ENCODE measurements at regions of chr2 and their contacts with region 1.

Region 1: GRCh38 chr2:12501469-12502158 is 215.1 kb upstream of the TRIB2 start:
- DNase-seq: peak in 8 of 9 donors; percentile 39 to 74 (median 70)
- ATAC-seq: peak; percentile 86
- H3K4me3 ChIP-seq: peak overlapping the region; percentile 5
- H3K4me3 Mint-ChIP-seq: peak overlapping the region; percentile 64 to 83 (median 77)
- H3K27ac ChIP-seq: peak overlapping the region; percentile 69
- H3K27ac Mint-ChIP-seq: peak overlapping the region; percentile 87 to 96 (median 91)
- H3K4me1 ChIP-seq: peaks cover 89 to 98% of the 10 kb centered on the region in 2 donors
- H3K4me1 Mint-ChIP-seq: peaks cover 74 to 100% (median 98%) of the 10 kb centered on the region in 7 donors
- H3K27me3 ChIP-seq: no peaks in the 10 kb centered on the region
- H3K27me3 Mint-ChIP-seq: no peaks in the 10 kb centered on the region

Region 2: GRCh38 chr2:12176623-12177454 is 324.8 kb before region 1 on chr2:
- CTCF ChIA-PET with region 1: no interaction called
- POLR2A ChIA-PET with region 1: no interaction called
- intact Hi-C with region 1: loop called in 1 of 2 experiments (anchors 5 kb)
- DNase-seq: peak in 1 of 9 donors; percentile 13
- ATAC-seq: peak; percentile 83
- H3K4me3 ChIP-seq: peak overlapping the region; percentile 21
- H3K4me3 Mint-ChIP-seq: peak overlapping the region in 9 of 10 donors; percentile 25 to 76 (median 62)
- H3K27ac ChIP-seq: no peak overlapping the region
- H3K27ac Mint-ChIP-seq: peak overlapping the region in 8 of 9 donors; percentile 8 to 95 (median 58)
- H3K4me1 ChIP-seq: peaks cover 10 to 25% of the 10 kb centered on the region in 2 donors
- H3K4me1 Mint-ChIP-seq: peaks cover 33 to 67% (median 52%) of the 10 kb centered on the region in 7 donors
- H3K27me3 ChIP-seq: no peaks in the 10 kb centered on the region
- H3K27me3 Mint-ChIP-seq: peaks cover 0 to 7% (median 0%) of the 10 kb centered on the region in 5 donors

Region 3: DNA sequence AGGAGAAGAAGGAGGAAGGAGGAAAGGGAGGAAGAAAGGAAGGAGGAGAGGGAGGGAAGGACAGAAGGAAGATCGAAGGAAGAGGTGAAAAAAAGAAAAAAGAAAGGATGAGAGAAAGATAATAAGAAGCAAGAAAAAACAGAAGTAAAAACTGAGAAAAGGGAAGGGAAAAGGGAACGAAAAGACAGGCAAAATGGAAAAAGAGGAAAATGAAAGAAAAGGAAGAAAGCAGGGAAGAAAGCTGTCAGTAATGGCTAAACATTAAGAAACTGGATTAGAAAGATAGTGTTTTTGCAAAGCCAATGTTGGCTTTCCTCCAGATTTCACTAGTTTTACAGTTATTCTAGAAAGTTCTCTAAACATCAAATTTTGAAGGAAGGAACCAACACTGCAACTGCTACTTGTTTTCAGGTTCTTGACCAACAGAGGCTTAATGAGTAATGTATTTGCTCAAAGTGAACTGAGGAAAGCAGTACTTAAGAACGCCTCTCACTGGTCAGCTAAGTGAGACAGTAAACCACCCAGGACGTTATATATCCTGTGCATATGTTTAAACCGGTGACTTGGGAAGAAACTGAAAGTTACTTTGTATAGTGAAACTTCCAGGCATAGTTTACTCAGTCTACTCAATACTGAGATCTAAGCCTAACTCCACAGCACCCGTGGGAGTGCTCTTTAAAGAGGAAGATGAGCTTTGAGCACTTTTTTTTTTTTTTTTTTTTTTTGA is 71.0 kb before region 1 on chr2:
- CTCF ChIA-PET with region 1: interaction called, 3 read pairs
- POLR2A ChIA-PET with region 1: interaction called, 7 read pairs
- intact Hi-C with region 1: loop called in 1 of 2 experiments (anchors 5 kb)
- DNase-seq: peak in 6 of 9 donors; percentile 10 to 28 (median 20)
- ATAC-seq: peak; percentile 87
- H3K4me3 ChIP-seq: peak overlapping the region; percentile 47
- H3K4me3 Mint-ChIP-seq: peak overlapping the region; percentile 31 to 83 (median 77)
- H3K27ac ChIP-seq: peak overlapping the region; percentile 22
- H3K27ac Mint-ChIP-seq: peak overlapping the region; percentile 60 to 91 (median 82)
- H3K4me1 ChIP-seq: peaks cover 0 to 12% of the 10 kb centered on the region in 2 donors
- H3K4me1 Mint-ChIP-seq: peaks cover 25 to 70% (median 49%) of the 10 kb centered on the region in 7 donors
- H3K27me3 ChIP-seq: no peaks in the 10 kb centered on the region
- H3K27me3 Mint-ChIP-seq: no peaks in the 10 kb centered on the region

Region 4: DNA sequence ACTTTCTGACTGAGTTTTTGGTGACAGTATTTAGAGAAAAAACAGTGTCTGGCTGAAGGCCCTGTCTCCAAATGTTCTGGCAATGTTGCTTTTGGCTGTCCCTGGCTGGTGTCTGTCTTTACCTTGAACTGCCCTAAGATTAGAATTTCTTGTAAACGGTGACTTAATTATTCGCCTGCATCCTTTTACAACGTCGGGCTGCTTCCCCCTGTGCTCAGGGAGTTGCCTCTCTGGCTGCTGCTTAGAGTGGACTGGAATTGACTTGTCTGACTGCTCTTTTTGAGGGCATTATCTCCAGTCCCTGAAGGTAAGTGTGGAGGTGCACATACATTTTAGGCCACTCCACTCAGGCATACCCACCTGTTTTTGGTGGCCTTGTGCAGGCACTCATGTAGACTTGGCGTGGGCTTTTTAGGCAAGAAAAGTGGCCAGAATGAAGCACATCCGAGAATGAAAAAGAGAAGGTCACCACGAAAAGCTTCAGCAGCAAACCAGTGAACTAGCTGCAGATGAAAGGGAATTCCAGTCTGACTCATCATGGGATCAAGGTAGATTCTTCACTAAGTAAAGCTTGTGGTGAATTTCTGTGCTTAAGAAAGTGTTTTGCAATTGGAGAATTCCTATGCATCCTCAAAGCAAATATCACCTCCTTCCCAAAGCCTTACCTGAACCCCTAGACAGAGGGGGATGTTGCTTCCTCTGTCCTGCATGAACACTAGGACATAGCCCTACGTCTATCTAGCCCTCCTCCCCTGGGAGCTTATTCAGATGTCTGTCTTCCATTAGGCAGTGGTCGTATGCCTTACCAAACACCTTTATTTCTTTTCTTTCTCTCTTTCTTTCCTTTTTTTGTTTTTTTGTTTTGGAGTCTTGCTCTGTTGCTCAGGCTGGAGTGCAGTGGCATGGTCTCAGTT is 15.2 kb before region 1 on chr2:
- CTCF ChIA-PET with region 1: interaction called, 8 read pairs
- POLR2A ChIA-PET with region 1: interaction called, 38 read pairs
- intact Hi-C with region 1: loop called (anchors 1 kb)
- DNase-seq: no peak
- ATAC-seq: no peak
- H3K4me3 ChIP-seq: no peak overlapping the region
- H3K4me3 Mint-ChIP-seq: peak overlapping the region in 9 of 10 donors; percentile 22 to 84 (median 75)
- H3K27ac ChIP-seq: peak overlapping the region; percentile 42
- H3K27ac Mint-ChIP-seq: peak overlapping the region in 8 of 9 donors; percentile 83 to 97 (median 92)
- H3K4me1 ChIP-seq: peaks cover 28 to 63% of the 10 kb centered on the region in 2 donors
- H3K4me1 Mint-ChIP-seq: peaks cover 50 to 80% (median 70%) of the 10 kb centered on the region in 7 donors
- H3K27me3 ChIP-seq: no peaks in the 10 kb centered on the region
- H3K27me3 Mint-ChIP-seq: no peaks in the 10 kb centered on the region

Region 5: GRCh38 chr2:12555012-12555645 is 53.5 kb after region 1 on chr2:
- CTCF ChIA-PET with region 1: no interaction called
- POLR2A ChIA-PET with region 1: interaction called, 3 read pairs
- intact Hi-C with region 1: loop called (anchors 5 kb)
- DNase-seq: peak in 1 of 9 donors; percentile 32
- ATAC-seq: peak; percentile 27
- H3K4me3 ChIP-seq: no peak overlapping the region
- H3K4me3 Mint-ChIP-seq: peak overlapping the region in 7 of 10 donors; percentile 5 to 66 (median 26)
- H3K27ac ChIP-seq: no peak overlapping the region
- H3K27ac Mint-ChIP-seq: peak overlapping the region in 8 of 9 donors; percentile 36 to 89 (median 74)
- H3K4me1 ChIP-seq: peaks cover 8 to 26% of the 10 kb centered on the region in 2 donors
- H3K4me1 Mint-ChIP-seq: peaks cover 25 to 62% (median 43%) of the 10 kb centered on the region in 7 donors
- H3K27me3 ChIP-seq: no peaks in the 10 kb centered on the region
- H3K27me3 Mint-ChIP-seq: no peaks in the 10 kb centered on the region

Measured in naive thymus-derived CD4-positive, alpha-beta T cell (primary cell).